Activated B cell treated with CpG ODN at 0.5 μM for 24 hours (primary cell): ENCODE measurements at regions of chrX and their contacts with region 1.

Region 1: DNA sequence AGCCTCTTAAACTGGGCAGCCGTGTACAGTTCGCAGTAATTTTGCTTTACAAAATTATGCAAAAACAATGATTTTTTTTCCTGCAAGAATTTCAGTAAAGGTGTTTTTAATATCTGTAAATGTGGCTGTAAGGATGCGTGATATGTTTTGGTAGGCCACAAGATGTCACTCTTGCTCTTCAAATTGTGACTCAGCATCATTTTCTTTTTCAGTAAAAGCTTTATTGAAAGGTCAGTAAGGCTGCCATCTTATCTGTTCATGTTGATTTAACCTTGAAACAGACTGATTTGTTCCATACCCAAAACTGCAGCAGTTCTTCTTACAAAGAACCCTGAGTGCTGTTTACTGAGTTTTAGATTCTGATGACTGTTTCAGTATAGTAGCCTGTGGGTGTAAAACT is 39.9 kb downstream of the TXLNG start:
- DNase-seq: no peak
- ATAC-seq: no peak
- H3K4me3 Mint-ChIP-seq: no peak overlapping the region
- H3K27ac Mint-ChIP-seq: no peak overlapping the region
- H3K4me1 Mint-ChIP-seq: no peaks in the 10 kb centered on the region
- H3K27me3 Mint-ChIP-seq: no peaks in the 10 kb centered on the region
- CTCF ChIP-seq: no peak

Region 2: GRCh38 chrX:16756724-16757123 is 69.5 kb before region 1 on chrX:
- CTCF ChIA-PET with region 1: no interaction called
- POLR2A ChIA-PET with region 1: no interaction called
- intact Hi-C with region 1: no loop called
- DNase-seq: no peak
- ATAC-seq: no peak
- H3K4me3 Mint-ChIP-seq: no peak overlapping the region
- H3K27ac Mint-ChIP-seq: no peak overlapping the region
- H3K4me1 Mint-ChIP-seq: no peaks in the 10 kb centered on the region
- H3K27me3 Mint-ChIP-seq: no peaks in the 10 kb centered on the region
- CTCF ChIP-seq: no peak

Region 3: GRCh38 chrX:16882702-16883486 is 56.7 kb after region 1 on chrX:
- CTCF ChIA-PET with region 1: interaction called, 6 read pairs
- POLR2A ChIA-PET with region 1: no interaction called
- intact Hi-C with region 1: loop called (anchors 2 kb)
- DNase-seq: peak; percentile 47
- ATAC-seq: peak; percentile 88
- H3K4me3 Mint-ChIP-seq: peak overlapping the region; percentile 78
- H3K27ac Mint-ChIP-seq: peak overlapping the region; percentile 86
- H3K4me1 Mint-ChIP-seq: peaks cover 20% of the 10 kb centered on the region
- H3K27me3 Mint-ChIP-seq: no peaks in the 10 kb centered on the region
- CTCF ChIP-seq: peak; percentile 46

Region 4: GRCh38 chrX:16892504-16893362 is 66.5 kb after region 1 on chrX:
- CTCF ChIA-PET with region 1: interaction called, 7 read pairs
- POLR2A ChIA-PET with region 1: no interaction called
- intact Hi-C with region 1: loop called (anchors 1 kb)
- DNase-seq: no peak
- ATAC-seq: peak; percentile 90
- H3K4me3 Mint-ChIP-seq: no peak overlapping the region
- H3K27ac Mint-ChIP-seq: no peak overlapping the region
- H3K4me1 Mint-ChIP-seq: peaks cover 6% of the 10 kb centered on the region
- H3K27me3 Mint-ChIP-seq: no peaks in the 10 kb centered on the region
- CTCF ChIP-seq: peak; percentile 45

Region 5: DNA sequence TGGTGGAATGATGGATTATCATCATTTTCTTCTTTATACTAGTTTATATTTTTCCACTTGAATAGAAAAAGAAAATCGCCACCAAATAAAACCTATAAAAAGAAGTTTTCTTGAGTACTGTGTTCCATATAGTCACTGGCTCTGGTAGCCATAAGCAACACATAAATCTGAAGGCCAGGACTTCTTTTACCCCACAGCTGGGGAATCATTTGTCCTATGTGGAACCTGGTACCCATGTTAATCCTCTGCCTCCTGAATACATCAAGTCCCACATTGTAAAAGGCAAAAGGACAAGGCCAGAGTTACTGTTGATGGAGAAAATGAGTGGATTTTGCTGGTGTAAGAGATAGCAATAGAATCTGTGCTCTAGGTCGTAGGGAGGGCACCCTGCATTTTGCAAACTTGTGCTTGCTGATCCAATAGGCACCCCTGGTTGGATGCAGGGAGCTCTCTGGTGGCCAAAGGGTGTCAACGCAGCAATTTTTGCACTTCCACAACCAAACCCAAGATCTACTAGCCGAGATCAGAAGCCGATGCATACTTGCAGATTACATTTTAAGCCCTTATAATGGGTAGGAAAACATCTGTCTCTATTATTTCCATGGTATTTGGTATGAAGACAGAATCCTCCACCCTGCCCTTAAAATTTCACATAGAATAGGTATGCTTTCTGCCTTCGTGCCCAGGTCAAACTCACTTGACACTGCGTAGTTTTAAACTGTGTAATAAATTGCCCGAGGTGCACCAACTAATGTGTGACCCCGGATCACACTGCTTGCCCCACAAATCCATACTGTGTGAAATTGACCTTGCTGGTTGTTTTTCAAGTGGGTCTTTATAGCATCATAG is 764.9 kb after region 1 on chrX:
- CTCF ChIA-PET with region 1: no interaction called
- POLR2A ChIA-PET with region 1: no interaction called
- intact Hi-C with region 1: loop called (anchors 5 kb)
- DNase-seq: no peak
- ATAC-seq: no peak
- H3K4me3 Mint-ChIP-seq: no peak overlapping the region
- H3K27ac Mint-ChIP-seq: no peak overlapping the region
- H3K4me1 Mint-ChIP-seq: no peaks in the 10 kb centered on the region
- H3K27me3 Mint-ChIP-seq: no peaks in the 10 kb centered on the region
- CTCF ChIP-seq: no peak